Breast epithelium (tissue), 4 donors: ENCODE measurements at regions of chr20 and their contacts with region 1.

Region 1: GRCh38 chr20:40506567-40506966 is 182.5 kb downstream of the MAFB start:
- DNase-seq: peak; percentile 79 to 96
- H3K4me3 ChIP-seq: no peak overlapping the region
- H3K27ac ChIP-seq: peak overlapping the region; percentile 59 to 84
- H3K4me1 ChIP-seq: peaks cover 3 to 4% of the 10 kb centered on the region in 2 donors
- H3K27me3 ChIP-seq: no peaks in the 10 kb centered on the region
- CTCF ChIP-seq: no peak
- POLR2A ChIP-seq: no peak

Region 2: GRCh38 chr20:40617594-40617993 is 111.0 kb after region 1 on chr20:
- intact Hi-C with region 1: no loop called
- DNase-seq: no peak
- H3K4me3 ChIP-seq: no peak overlapping the region
- H3K27ac ChIP-seq: no peak overlapping the region
- H3K4me1 ChIP-seq: no peaks in the 10 kb centered on the region
- H3K27me3 ChIP-seq: no peaks in the 10 kb centered on the region
- CTCF ChIP-seq: no peak
- POLR2A ChIP-seq: no peak

Region 3: GRCh38 chr20:40689943-40690835 is 183.6 kb after region 1 on chr20:
- intact Hi-C with region 1: loop called (anchors 10 kb)
- DNase-seq: peak; percentile 88 to 93
- H3K4me3 ChIP-seq: peak overlapping the region; percentile 78 to 92 (median 83)
- H3K27ac ChIP-seq: peak overlapping the region; percentile 92 to 95
- H3K4me1 ChIP-seq: peaks cover 0 to 2% of the 10 kb centered on the region in 2 donors
- H3K27me3 ChIP-seq: no peaks in the 10 kb centered on the region
- CTCF ChIP-seq: peak; percentile 91 to 95 (median 92)
- POLR2A ChIP-seq: no peak